ENCODE measurements at regions of chr10 and their contacts with region 1.

Region 1: GRCh38 chr10:133438711-133439273 is 14.4 kb upstream of the SPRN start:
- DNase-seq: peak; percentile 30
- ATAC-seq: peak; percentile 43; the same call in 1 of the 2 replicates
- H3K4me3 ChIP-seq: no peak overlapping the region
- H3K27ac ChIP-seq: no peak overlapping the region
- H3K4me1 ChIP-seq: no peaks in the 10 kb centered on the region
- H3K27me3 ChIP-seq: no peaks in the 10 kb centered on the region
- CTCF ChIP-seq: peak; percentile 78

Region 2: GRCh38 chr10:133400624-133401424 is 38.0 kb before region 1 on chr10:
- CTCF ChIA-PET with region 1: no interaction called
- POLR2A ChIA-PET with region 1: no interaction called
- in situ Hi-C with region 1: no loop called
- intact Hi-C with region 1: no loop called
- DNase-seq: no peak
- ATAC-seq: no peak; the same call in 1 of the 2 replicates
- H3K4me3 ChIP-seq: no peak overlapping the region
- H3K27ac ChIP-seq: no peak overlapping the region
- H3K4me1 ChIP-seq: no peaks in the 10 kb centered on the region; the same call in 1 of the 2 replicates
- H3K27me3 ChIP-seq: no peaks in the 10 kb centered on the region
- CTCF ChIP-seq: no peak

Region 3: GRCh38 chr10:133516057-133516456 is 77.3 kb after region 1 on chr10:
- CTCF ChIA-PET with region 1: interaction called, 4 read pairs
- POLR2A ChIA-PET with region 1: no interaction called
- in situ Hi-C with region 1: no loop called
- intact Hi-C with region 1: loop called (anchors 5 kb)
- DNase-seq: no peak
- ATAC-seq: no peak
- H3K4me3 ChIP-seq: no peak overlapping the region
- H3K27ac ChIP-seq: no peak overlapping the region
- H3K4me1 ChIP-seq: peaks cover 9% of the 10 kb centered on the region; the same call in 1 of the 2 replicates
- H3K27me3 ChIP-seq: peaks cover 39% of the 10 kb centered on the region
- CTCF ChIP-seq: peak; percentile 16; the same call in 1 of the 2 replicates

Measured in Panc1 (cell line).